B cell (primary cell): ENCODE measurements at regions of chr16 and their contacts with region 1.

Region 1: GRCh38 chr16:82046941-82047340 is 11.9 kb downstream of the HSD17B2 start:
- DNase-seq: no peak
- ATAC-seq: no peak
- H3K4me3 ChIP-seq: no peak overlapping the region
- H3K4me3 Mint-ChIP-seq: no peak overlapping the region
- H3K27ac ChIP-seq: no peak overlapping the region
- H3K27ac Mint-ChIP-seq: no peak overlapping the region
- H3K4me1 ChIP-seq: no peaks in the 10 kb centered on the region
- H3K4me1 Mint-ChIP-seq: no peaks in the 10 kb centered on the region
- H3K27me3 ChIP-seq: peaks cover 0 to 16% (median 0%) of the 10 kb centered on the region in 4 experiments
- H3K27me3 Mint-ChIP-seq: peaks cover 47% of the 10 kb centered on the region
- CTCF ChIP-seq: no peak

Region 2: GRCh38 chr16:82061861-82062525 is 15.1 kb after region 1 on chr16:
- CTCF ChIA-PET with region 1: interaction called, 10 read pairs
- POLR2A ChIA-PET with region 1: no interaction called
- intact Hi-C with region 1: no loop called
- DNase-seq: peak; percentile 36
- ATAC-seq: no peak
- H3K4me3 ChIP-seq: no peak overlapping the region
- H3K4me3 Mint-ChIP-seq: no peak overlapping the region
- H3K27ac ChIP-seq: no peak overlapping the region
- H3K27ac Mint-ChIP-seq: no peak overlapping the region
- H3K4me1 ChIP-seq: no peaks in the 10 kb centered on the region
- H3K4me1 Mint-ChIP-seq: no peaks in the 10 kb centered on the region
- H3K27me3 ChIP-seq: peaks cover 0 to 6% (median 2%) of the 10 kb centered on the region in 4 experiments
- H3K27me3 Mint-ChIP-seq: peaks cover 35% of the 10 kb centered on the region
- CTCF ChIP-seq: peak; percentile 66